ENCODE measurements at regions of chr10 and their contacts with region 1.

Region 1: DNA sequence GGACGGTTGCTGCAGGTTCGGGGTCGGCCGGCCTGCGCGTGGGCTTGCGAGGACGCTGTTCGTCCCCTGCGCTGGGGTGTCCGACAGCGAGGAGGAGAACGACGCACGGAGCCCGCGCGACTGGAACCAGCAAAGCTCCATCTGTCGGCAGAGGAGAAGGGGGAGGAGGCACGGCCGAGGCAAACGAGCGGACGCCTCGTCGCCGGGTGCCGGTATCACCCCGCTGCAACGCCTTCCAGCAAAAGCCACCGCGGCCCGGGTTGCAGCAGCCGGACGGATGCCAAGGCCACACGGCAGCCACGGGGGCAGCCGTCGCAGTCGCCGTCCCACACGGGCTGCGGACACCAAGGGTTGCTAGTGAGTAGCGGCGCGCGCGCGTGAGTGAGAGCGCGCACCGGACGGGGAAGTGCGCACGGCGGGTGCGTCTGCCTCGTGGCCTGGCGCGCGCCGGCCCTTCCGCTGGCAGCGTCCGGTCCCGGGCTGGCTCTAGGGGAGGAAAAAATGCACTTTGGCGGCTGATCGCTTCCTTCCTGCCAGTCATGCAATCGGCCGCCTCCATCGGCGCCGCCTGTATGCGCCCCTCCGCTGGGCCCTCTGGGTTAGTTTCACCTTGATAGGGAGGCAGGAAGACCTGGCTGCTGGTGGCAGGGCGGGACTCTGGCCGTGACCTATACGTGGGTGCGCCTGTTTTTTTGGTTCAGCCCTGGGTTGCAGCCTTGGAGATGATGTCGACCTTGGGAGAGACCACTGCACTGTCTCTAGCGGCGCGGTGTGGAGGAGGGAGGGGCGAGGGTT is 434 bp downstream of the STAMBPL1 start:
- DNase-seq: peak; percentile 34 to 60
- ATAC-seq: peak; percentile 76 to 81
- H3K4me3 ChIP-seq: peak overlapping the region; percentile 66 to 85 (median 74)
- H3K27ac ChIP-seq: peak overlapping the region; percentile 67 to 83 (median 80)
- H3K4me1 ChIP-seq: peaks cover 8 to 21% of the 10 kb centered on the region in 2 donors
- H3K27me3 ChIP-seq: peaks cover 0 to 10% (median 6%) of the 10 kb centered on the region in 3 donors
- CTCF ChIP-seq: peak in 1 of 5 experiments; percentile 23
- POLR2A ChIP-seq: peak; percentile 34 to 62

Region 2: GRCh38 chr10:88990384-88991160 is 110.1 kb after region 1 on chr10 and contains the start of gene FAS:
- in situ Hi-C with region 1: no loop called
- intact Hi-C with region 1: loop called (anchors 5 kb)
- DNase-seq: peak; percentile 24 to 54
- ATAC-seq: peak; percentile 52 to 66
- H3K4me3 ChIP-seq: peak within 1 kb of the TSS; percentile 72 to 88 (median 82)
- H3K27ac ChIP-seq: peak within 1 kb of the TSS; percentile 76 to 87 (median 84)
- H3K4me1 ChIP-seq: peaks cover 7 to 9% of the 10 kb centered on the region in 2 donors
- H3K27me3 ChIP-seq: no peaks in the 10 kb centered on the region
- CTCF ChIP-seq: no peak
- POLR2A ChIP-seq: peak; percentile 1 to 27
- total RNA-seq, gene FAS: 2.7 to 5.9 (median 4.9) TPM